ENCODE measurements at regions of chr13 and their contacts with region 1.

Region 1: DNA sequence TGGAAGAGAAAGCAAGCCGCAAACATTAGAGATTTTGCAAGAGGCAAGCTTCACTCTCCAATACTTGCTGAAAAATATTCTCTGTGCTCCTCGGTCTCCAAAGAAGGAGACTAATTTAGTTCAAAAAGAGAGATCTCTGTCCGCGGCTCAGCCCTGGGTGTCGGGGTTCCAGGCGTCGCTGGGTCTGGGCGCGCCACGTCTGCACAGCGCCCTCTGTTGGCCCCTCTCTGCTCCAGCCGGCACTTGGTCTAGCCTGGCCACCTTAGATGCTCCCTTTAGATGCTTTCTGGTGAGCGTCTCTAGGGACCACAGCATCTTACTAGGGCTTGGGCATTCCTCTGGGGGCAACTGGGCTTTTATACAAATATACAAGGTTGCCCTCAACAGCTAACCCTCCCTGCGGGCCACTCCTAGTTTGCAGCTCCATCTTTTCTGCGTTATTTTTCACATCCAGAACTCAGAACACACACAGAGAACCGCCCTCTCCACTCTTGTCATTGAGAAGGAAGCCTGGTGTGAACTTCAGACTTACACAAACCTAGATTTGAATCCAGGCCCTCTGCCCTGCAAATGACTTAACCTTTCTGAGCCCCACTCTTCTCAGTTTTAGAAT is 78.3 kb downstream of the CYSLTR2 start:
- DNase-seq: peak; percentile 32 to 81 (median 56)
- ATAC-seq: peak; percentile 88
- H3K4me3 ChIP-seq: peak overlapping the region; percentile 13
- H3K4me3 Mint-ChIP-seq: peak overlapping the region; percentile 79
- H3K27ac ChIP-seq: no peak overlapping the region
- H3K27ac Mint-ChIP-seq: no peak overlapping the region
- H3K4me1 ChIP-seq: peaks cover 5% of the 10 kb centered on the region
- H3K4me1 Mint-ChIP-seq: peaks cover 14% of the 10 kb centered on the region
- H3K27me3 ChIP-seq: no peaks in the 10 kb centered on the region
- H3K27me3 Mint-ChIP-seq: no peaks in the 10 kb centered on the region
- CTCF ChIP-seq: peak; percentile 76

Region 2: DNA sequence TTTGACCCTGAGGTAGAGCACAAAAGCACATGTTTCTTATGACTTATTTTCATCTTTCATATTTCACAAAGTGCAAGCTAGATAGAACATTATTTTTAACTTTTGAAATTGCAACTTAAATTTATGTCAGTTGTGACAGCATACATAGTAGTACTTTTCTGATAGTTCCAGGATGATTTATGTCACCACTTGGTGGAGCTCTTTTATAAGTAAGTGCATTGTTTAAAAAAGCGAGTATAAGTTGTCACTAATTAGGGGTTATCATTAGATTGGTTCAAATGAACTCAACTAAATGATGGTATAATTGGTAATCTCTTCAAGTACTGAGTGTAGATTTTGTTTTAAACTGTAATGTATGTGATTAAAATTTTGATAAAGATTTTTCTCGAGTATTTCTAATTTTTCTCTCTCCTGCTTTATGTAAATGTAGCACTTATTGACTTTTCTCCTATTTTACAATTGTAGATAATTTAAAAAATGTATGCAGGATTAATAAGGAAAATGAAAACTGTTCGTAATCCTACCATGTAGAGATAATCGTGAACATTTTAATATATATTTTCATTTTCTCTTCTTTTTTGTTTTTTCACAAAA is 397.4 kb before region 1 on chr13:
- CTCF ChIA-PET with region 1: no interaction called
- POLR2A ChIA-PET with region 1: no interaction called
- intact Hi-C with region 1: loop called in 1 of 2 experiments (anchors 2 kb)
- DNase-seq: peak in 3 of 14 experiments; percentile 68 to 73 (median 71)
- ATAC-seq: peak; percentile 71
- H3K4me3 ChIP-seq: no peak overlapping the region
- H3K4me3 Mint-ChIP-seq: no peak overlapping the region
- H3K27ac ChIP-seq: no peak overlapping the region
- H3K27ac Mint-ChIP-seq: no peak overlapping the region
- H3K4me1 ChIP-seq: no peaks in the 10 kb centered on the region
- H3K4me1 Mint-ChIP-seq: peaks cover 13% of the 10 kb centered on the region
- H3K27me3 ChIP-seq: no peaks in the 10 kb centered on the region
- H3K27me3 Mint-ChIP-seq: no peaks in the 10 kb centered on the region
- CTCF ChIP-seq: peak; percentile 95

Region 3: DNA sequence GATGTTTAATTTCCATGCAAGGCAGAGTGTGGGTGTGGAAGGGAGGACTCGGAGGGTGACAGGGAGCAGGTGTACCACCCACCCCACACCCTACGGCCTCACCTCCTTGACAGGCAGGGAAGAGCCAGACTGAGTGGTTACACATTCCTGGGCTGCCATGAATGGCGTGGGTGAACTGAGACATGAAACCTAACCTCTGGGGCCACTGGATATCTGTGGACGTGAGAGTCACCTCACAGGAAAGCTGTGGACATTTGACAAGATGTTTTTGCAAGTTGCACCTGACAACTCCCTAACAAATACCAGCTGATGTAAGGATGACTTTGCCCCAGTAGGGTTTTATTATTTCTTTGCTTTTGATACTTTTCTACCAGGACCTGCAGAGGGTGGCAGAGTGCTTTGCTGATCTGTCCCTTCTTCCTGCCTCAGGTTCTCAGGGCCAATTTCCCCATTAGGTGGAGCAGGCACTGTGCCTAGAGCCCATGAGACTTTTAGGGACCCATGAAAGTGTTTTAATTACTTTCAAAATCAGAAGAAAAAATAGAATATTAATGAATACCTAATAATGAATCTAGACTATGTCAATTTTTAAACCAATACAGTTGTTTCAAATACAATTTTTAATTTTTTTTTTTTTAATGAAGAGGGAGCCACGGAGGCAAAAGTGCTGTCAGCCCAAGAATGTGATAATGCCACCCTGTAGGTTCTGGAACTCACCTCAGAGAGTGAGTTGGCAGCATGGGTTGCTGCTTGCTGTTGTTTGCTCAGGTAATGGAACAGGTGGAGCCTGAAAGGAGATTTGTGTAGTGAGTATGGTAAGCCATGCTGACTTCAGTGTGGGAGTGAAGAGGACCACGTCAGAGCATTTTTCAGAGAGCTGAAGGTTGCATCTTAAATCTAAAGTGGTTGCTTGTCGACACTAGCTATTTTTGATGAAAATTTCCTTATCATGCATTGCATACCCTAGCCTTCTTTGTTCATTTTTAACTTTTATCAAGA is 136.3 kb before region 1 on chr13:
- CTCF ChIA-PET with region 1: interaction called, 8 read pairs
- POLR2A ChIA-PET with region 1: no interaction called
- intact Hi-C with region 1: loop called (anchors 1 kb)
- DNase-seq: peak; percentile 38 to 87 (median 50)
- ATAC-seq: peak; percentile 95
- H3K4me3 ChIP-seq: no peak overlapping the region
- H3K4me3 Mint-ChIP-seq: no peak overlapping the region
- H3K27ac ChIP-seq: no peak overlapping the region
- H3K27ac Mint-ChIP-seq: no peak overlapping the region
- H3K4me1 ChIP-seq: no peaks in the 10 kb centered on the region
- H3K4me1 Mint-ChIP-seq: no peaks in the 10 kb centered on the region
- H3K27me3 ChIP-seq: no peaks in the 10 kb centered on the region
- H3K27me3 Mint-ChIP-seq: no peaks in the 10 kb centered on the region
- CTCF ChIP-seq: peak; percentile 68

Region 4: GRCh38 chr13:48695776-48696175 is 36.3 kb before region 1 on chr13:
- CTCF ChIA-PET with region 1: no interaction called
- POLR2A ChIA-PET with region 1: no interaction called
- intact Hi-C with region 1: no loop called
- DNase-seq: no peak
- ATAC-seq: no peak
- H3K4me3 ChIP-seq: no peak overlapping the region
- H3K4me3 Mint-ChIP-seq: no peak overlapping the region
- H3K27ac ChIP-seq: no peak overlapping the region
- H3K27ac Mint-ChIP-seq: no peak overlapping the region
- H3K4me1 ChIP-seq: no peaks in the 10 kb centered on the region
- H3K4me1 Mint-ChIP-seq: no peaks in the 10 kb centered on the region
- H3K27me3 ChIP-seq: no peaks in the 10 kb centered on the region
- H3K27me3 Mint-ChIP-seq: no peaks in the 10 kb centered on the region
- CTCF ChIP-seq: no peak